ENCODE measurements at regions of chr10 and their contacts with region 1.

Region 1: GRCh38 chr10:71771821-71772617 is 1.3 kb downstream of the VSIR start:
- DNase-seq: peak; percentile 37
- H3K4me3 Mint-ChIP-seq: peak overlapping the region; percentile 95
- H3K27ac Mint-ChIP-seq: peak overlapping the region; percentile 86
- H3K4me1 Mint-ChIP-seq: peaks cover 85% of the 10 kb centered on the region
- H3K27me3 Mint-ChIP-seq: no peaks in the 10 kb centered on the region

Region 2: GRCh38 chr10:71666639-71667386 is 105.2 kb before region 1 on chr10:
- CTCF ChIA-PET with region 1: no interaction called
- POLR2A ChIA-PET with region 1: no interaction called
- DNase-seq: no peak
- H3K4me3 Mint-ChIP-seq: no peak overlapping the region
- H3K27ac Mint-ChIP-seq: no peak overlapping the region
- H3K4me1 Mint-ChIP-seq: peaks cover 13% of the 10 kb centered on the region
- H3K27me3 Mint-ChIP-seq: peaks cover 3% of the 10 kb centered on the region

Region 3: GRCh38 chr10:71696628-71697326 is 75.2 kb before region 1 on chr10:
- CTCF ChIA-PET with region 1: interaction called, 22 read pairs
- POLR2A ChIA-PET with region 1: no interaction called
- DNase-seq: peak; percentile 65
- H3K4me3 Mint-ChIP-seq: no peak overlapping the region
- H3K27ac Mint-ChIP-seq: peak overlapping the region; percentile 60
- H3K4me1 Mint-ChIP-seq: peaks cover 52% of the 10 kb centered on the region
- H3K27me3 Mint-ChIP-seq: no peaks in the 10 kb centered on the region

Region 4: DNA sequence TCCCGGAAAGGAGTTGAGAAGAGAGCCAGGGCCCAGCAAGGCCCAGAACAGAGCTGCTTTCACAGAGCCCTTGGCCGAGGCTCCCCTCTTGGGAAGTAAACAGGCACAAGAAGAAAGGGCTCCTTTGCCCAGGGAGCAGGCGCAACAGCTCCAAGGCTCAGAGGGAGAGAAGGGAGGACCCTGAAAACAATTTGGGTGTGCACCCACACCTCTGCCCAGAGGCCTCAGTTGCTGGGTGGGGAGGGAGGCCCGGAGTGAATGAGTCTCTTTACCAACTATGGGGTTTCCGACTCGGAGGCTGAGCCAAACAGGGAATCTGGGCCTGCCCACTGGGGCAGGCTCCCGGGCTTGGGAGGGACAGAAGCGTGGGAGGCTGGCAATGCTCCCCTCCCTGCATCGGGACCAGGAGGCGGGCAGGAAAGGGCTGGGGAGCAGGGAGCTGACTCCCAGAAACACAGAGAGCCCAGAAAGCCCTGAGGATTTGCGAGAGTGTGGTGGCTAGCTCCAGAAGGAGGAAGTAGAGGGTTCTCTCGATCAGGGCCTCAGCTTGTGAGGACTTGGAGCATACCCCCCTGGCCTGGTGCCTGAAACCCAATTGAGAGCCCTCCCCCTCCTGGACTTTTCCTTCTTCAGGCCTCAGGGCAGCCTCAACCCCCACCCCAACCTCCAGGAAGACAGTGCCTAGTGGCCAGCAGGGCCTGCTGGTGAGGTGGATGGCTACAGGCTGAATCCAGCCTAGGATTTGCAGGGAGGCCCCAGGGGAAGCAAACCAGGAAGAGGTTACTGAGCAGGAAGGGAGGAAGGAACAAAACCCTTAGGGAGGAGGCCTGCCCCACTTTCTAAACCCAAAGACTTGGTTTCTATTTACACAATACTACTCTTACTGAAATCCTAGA is 58.6 kb before region 1 on chr10:
- CTCF ChIA-PET with region 1: interaction called, 32 read pairs
- POLR2A ChIA-PET with region 1: no interaction called
- DNase-seq: no peak
- H3K4me3 Mint-ChIP-seq: peak overlapping the region; percentile 55
- H3K27ac Mint-ChIP-seq: peak overlapping the region; percentile 97
- H3K4me1 Mint-ChIP-seq: peaks cover 58% of the 10 kb centered on the region
- H3K27me3 Mint-ChIP-seq: no peaks in the 10 kb centered on the region

Region 5: GRCh38 chr10:71740069-71740468 is 31.9 kb before region 1 on chr10:
- CTCF ChIA-PET with region 1: interaction called, 22 read pairs
- POLR2A ChIA-PET with region 1: interaction called, 3 read pairs
- DNase-seq: no peak
- H3K4me3 Mint-ChIP-seq: no peak overlapping the region
- H3K27ac Mint-ChIP-seq: peak overlapping the region; percentile 71
- H3K4me1 Mint-ChIP-seq: peaks cover 97% of the 10 kb centered on the region
- H3K27me3 Mint-ChIP-seq: no peaks in the 10 kb centered on the region

Region 6: GRCh38 chr10:71756311-71757191 is 15.5 kb before region 1 on chr10:
- CTCF ChIA-PET with region 1: interaction called, 39 read pairs
- POLR2A ChIA-PET with region 1: interaction called, 6 read pairs
- DNase-seq: peak; percentile 53
- H3K4me3 Mint-ChIP-seq: peak overlapping the region; percentile 50
- H3K27ac Mint-ChIP-seq: peak overlapping the region; percentile 93
- H3K4me1 Mint-ChIP-seq: peaks cover 89% of the 10 kb centered on the region
- H3K27me3 Mint-ChIP-seq: no peaks in the 10 kb centered on the region

Region 7: DNA sequence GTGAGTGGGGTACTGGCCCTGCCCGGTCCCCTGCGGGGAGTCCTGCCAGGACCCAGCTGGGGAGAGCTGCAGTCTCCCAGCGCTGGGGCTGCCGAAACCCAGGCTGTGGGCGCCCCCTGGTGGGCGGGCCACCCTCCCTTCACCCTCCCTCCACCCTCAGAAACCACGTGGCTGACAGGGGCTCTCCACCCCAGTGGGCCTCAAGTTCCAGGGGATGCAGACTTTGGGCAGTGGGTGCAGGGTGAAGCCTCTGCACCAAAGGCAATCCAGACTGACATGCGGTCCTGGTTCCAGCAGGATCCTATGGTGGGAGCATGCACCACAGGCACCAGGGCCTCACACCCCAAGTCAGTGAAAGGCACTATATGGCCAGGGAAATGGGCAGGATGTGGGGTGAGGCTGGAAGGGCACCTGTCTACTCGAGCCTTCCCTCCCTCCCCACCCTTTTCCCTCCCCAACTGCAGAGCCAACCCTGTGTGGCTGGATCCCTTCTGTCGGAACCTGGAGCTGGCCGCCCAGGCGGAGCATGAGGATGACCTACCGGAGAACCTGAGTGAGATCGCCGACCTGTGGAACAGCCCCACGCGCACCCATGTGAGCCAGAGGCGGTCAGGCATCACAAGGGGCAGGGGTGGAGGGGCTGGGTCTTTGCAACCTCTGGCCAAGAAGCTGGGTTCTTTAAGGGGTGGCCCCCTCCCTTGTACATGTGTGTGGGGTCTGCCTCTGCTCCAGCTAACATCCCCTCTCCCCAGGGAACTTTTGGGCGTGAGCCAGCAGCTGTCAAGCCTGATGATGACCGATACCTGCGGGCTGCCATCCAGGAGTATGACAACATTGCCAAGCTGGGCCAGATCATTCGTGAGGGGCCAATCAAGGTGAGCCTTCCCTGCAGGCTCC is 40.2 kb after region 1 on chr10:
- CTCF ChIA-PET with region 1: interaction called, 19 read pairs
- POLR2A ChIA-PET with region 1: no interaction called
- DNase-seq: peak; percentile 77
- H3K4me3 Mint-ChIP-seq: no peak overlapping the region
- H3K27ac Mint-ChIP-seq: no peak overlapping the region
- H3K4me1 Mint-ChIP-seq: peaks cover 2% of the 10 kb centered on the region
- H3K27me3 Mint-ChIP-seq: no peaks in the 10 kb centered on the region

Region 8: DNA sequence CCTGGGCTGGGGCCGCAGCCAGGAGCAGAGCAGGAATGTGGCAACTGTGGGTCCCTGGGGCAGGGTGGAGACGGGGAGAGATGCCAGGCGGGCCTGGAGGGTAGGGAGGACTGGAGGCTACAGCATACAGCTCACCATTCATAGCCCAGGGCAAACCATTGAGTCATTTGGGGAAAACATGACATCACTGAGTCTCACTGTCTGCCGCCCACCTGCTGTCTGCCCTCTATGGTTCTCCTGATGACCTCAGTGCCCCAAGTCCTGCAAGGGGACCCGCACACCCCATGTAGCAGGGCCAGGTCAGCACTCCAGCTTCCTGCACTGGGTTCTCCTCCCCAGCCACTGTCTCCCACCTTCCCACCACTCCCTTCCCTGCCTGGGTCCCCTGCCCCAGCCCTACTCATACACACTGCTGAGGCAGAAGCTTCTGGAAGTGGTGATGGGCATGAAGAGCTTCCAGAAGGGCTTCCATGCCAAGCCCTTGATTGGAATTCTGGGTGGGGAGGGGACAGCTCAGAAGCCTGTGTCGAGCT is 202.5 kb after region 1 on chr10:
- CTCF ChIA-PET with region 1: no interaction called
- POLR2A ChIA-PET with region 1: no interaction called
- DNase-seq: no peak
- H3K4me3 Mint-ChIP-seq: no peak overlapping the region
- H3K27ac Mint-ChIP-seq: no peak overlapping the region
- H3K4me1 Mint-ChIP-seq: peaks cover 8% of the 10 kb centered on the region
- H3K27me3 Mint-ChIP-seq: no peaks in the 10 kb centered on the region

Measured in activated CD4-positive, alpha-beta T cell treated with anti-CD3 and anti-CD28 coated beads, Interleukin-2, amount 10 ng/mL, durations not matched to agents 7 days and 5 days (primary cell).